Tibial artery (tissue), 4 donors: ENCODE measurements at regions of chrX and their contacts with region 1.

Region 1: DNA sequence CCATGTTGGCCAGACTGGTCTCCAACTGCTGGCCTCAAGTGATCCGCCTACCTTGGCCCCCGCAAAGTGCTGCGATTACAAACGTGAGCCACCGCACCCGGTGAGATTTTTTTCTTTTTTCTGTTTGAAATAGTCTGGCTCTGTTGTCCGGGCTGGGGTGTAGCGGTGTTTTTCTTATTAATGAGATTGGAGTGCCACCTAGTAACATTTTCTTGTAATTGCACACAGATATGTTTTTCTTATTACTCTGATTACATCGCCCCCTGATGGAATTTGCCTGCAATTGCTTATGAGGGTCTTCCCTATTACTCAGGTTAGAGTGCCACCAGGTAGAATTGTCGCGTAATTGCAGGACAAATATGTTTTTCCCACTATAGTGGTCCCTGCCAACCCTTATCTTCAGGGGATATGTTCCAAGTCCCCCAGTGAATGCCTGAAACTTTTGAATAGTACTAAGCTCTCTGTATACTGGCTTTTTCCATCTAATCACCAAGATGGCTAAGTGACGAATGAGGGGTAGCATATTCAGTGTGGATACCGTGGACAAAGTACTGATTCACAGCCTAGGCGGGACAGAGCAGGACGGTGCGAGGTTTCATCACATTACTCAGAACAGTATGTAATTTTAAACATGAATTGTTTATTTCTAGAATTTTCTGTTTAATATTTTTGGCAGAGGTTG is 8.6 kb upstream of the PDHA1 start:
- DNase-seq: no peak
- H3K4me3 ChIP-seq: no peak overlapping the region
- H3K27ac ChIP-seq: no peak overlapping the region
- H3K4me1 ChIP-seq: no peaks in the 10 kb centered on the region
- H3K27me3 ChIP-seq: no peaks in the 10 kb centered on the region
- CTCF ChIP-seq: no peak

Region 2: GRCh38 chrX:18389968-18390367 is 945.1 kb before region 1 on chrX:
- intact Hi-C with region 1: loop called (anchors 5 kb)
- DNase-seq: no peak
- H3K4me3 ChIP-seq: no peak overlapping the region
- H3K27ac ChIP-seq: no peak overlapping the region
- H3K4me1 ChIP-seq: no peaks in the 10 kb centered on the region
- H3K27me3 ChIP-seq: no peaks in the 10 kb centered on the region
- CTCF ChIP-seq: no peak

Region 3: GRCh38 chrX:18931972-18932371 is 403.1 kb before region 1 on chrX:
- intact Hi-C with region 1: loop called (anchors 10 kb)
- DNase-seq: no peak
- H3K4me3 ChIP-seq: no peak overlapping the region
- H3K27ac ChIP-seq: no peak overlapping the region
- H3K4me1 ChIP-seq: no peaks in the 10 kb centered on the region
- H3K27me3 ChIP-seq: no peaks in the 10 kb centered on the region
- CTCF ChIP-seq: peak; percentile 18 to 25

Region 4: DNA sequence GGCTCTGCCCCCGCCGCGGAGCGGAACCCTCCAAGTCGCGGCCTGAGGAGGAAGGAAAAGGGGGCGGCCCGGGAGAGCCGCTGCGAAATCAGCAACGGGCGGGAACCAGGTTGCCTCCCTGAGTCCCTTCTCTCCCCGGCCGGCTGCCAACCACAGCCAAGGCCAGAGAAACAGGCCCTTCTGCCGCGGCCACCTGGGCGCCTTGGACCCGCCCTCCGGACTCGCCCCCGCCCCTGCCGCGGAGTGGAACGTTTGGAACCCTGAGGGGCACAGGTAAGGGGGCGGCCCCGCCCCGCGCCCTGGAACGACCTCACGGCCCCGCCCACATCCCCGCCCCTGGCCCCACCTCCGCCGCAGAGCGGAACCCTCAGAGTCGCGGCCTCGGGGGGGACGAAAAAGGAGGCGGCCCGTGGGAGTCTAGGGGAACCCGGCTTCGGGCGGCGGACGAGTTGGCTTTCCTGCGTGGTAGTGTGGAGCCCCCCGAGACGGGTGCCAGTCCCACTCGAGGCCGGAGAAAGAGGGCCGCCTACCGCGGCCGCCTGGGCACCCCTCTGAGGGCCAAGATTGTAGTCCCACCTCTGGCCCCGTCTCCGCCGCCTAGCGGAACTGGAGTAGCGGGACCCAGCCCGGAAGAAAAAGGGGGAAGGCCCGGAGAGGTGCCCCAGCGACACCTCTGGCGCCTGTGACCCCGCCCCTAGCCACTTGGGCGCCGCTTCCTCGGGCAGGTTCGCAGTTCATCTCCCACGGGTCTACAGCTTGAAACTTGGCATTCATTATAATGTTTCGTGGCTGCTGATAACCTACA is 350.5 kb before region 1 on chrX:
- intact Hi-C with region 1: loop called (anchors 10 kb)
- DNase-seq: peak; percentile 67 to 85
- H3K4me3 ChIP-seq: peak overlapping the region; percentile 76 to 77
- H3K27ac ChIP-seq: peak overlapping the region; percentile 92 to 94
- H3K4me1 ChIP-seq: peaks cover 0 to 4% (median 0%) of the 10 kb centered on the region in 4 donors
- H3K27me3 ChIP-seq: no peaks in the 10 kb centered on the region
- CTCF ChIP-seq: peak; percentile 45 to 55